IMR-90 (cell line): ENCODE measurements at regions of chr17 and their contacts with region 1.

Region 1: GRCh38 chr17:44503147-44504029 is at the start of gene GPATCH8:
- DNase-seq: peak; percentile 93
- ATAC-seq: peak; percentile 99
- H3K4me3 ChIP-seq: peak within 1 kb of the TSS; percentile 77
- H3K27ac ChIP-seq: peak within 1 kb of the TSS; percentile 95
- H3K4me1 ChIP-seq: peaks cover 2% of the 10 kb centered on the region; the same call in 1 of the 2 replicates
- H3K27me3 ChIP-seq: no peaks in the 10 kb centered on the region
- CTCF ChIP-seq: no peak
- POLR2A ChIP-seq: peak; percentile 74
- RAD21 ChIP-seq: no peak
- total RNA-seq, gene GPATCH8: 8.8 and 13.3 TPM in 2 replicates

Region 2: GRCh38 chr17:44199553-44200477 is 303.6 kb before region 1 on chr17 and contains the start of gene ATXN7L3:
- CTCF ChIA-PET with region 1: no interaction called
- POLR2A ChIA-PET with region 1: no interaction called
- dilution Hi-C with region 1: no loop called
- in situ Hi-C with region 1: loop called (anchors 25 kb)
- intact Hi-C with region 1: no loop called
- DNase-seq: peak; percentile 97
- ATAC-seq: peak; percentile 84
- H3K4me3 ChIP-seq: peak within 1 kb of the TSS; percentile 85
- H3K27ac ChIP-seq: peak within 1 kb of the TSS; percentile 98
- H3K4me1 ChIP-seq: peaks cover 22% of the 10 kb centered on the region
- H3K27me3 ChIP-seq: no peaks in the 10 kb centered on the region
- CTCF ChIP-seq: no peak
- POLR2A ChIP-seq: peak; percentile 79
- RAD21 ChIP-seq: no peak
- total RNA-seq, gene ATXN7L3: 17.2 and 17.5 TPM in 2 replicates

Region 3: GRCh38 chr17:44218344-44219107 is 284.9 kb before region 1 on chr17:
- CTCF ChIA-PET with region 1: no interaction called
- POLR2A ChIA-PET with region 1: no interaction called
- dilution Hi-C with region 1: no loop called
- in situ Hi-C with region 1: loop called (anchors 25 kb)
- intact Hi-C with region 1: loop called (anchors 10 kb)
- DNase-seq: peak; percentile 83
- ATAC-seq: peak; percentile 66
- H3K4me3 ChIP-seq: peak overlapping the region; percentile 61
- H3K27ac ChIP-seq: peak overlapping the region; percentile 92
- H3K4me1 ChIP-seq: peaks cover 12% of the 10 kb centered on the region
- H3K27me3 ChIP-seq: no peaks in the 10 kb centered on the region
- CTCF ChIP-seq: peak; percentile 66
- POLR2A ChIP-seq: peak; percentile 42; the same call in 1 of the 2 replicates
- RAD21 ChIP-seq: peak; percentile 31

Region 4: GRCh38 chr17:44400226-44400847 is 103.1 kb before region 1 on chr17:
- CTCF ChIA-PET with region 1: no interaction called
- POLR2A ChIA-PET with region 1: no interaction called
- dilution Hi-C with region 1: no loop called
- in situ Hi-C with region 1: loop called (anchors 5 kb)
- intact Hi-C with region 1: loop called (anchors 1 kb)
- DNase-seq: peak; percentile 41
- ATAC-seq: peak; percentile 89
- H3K4me3 ChIP-seq: no peak overlapping the region
- H3K27ac ChIP-seq: no peak overlapping the region
- H3K4me1 ChIP-seq: no peaks in the 10 kb centered on the region
- H3K27me3 ChIP-seq: no peaks in the 10 kb centered on the region
- CTCF ChIP-seq: peak; percentile 66
- POLR2A ChIP-seq: no peak
- RAD21 ChIP-seq: peak; percentile 65

Region 5: DNA sequence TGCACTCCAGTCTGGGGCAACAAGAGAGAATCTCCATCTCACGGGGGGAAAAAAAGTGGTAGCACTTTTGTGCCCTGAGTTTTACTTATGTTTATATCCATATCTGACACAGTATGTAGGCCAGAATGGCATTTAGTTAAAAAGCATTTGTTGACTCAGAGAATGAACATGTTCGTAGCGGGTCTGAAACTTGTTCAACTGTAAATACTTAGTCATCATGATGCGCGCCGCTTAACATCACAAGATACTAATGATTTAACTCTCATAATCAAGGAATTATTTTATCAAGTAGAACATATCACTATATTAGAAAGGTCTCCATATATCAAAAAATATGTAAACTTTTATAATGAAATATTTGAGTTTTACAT is 58.7 kb before region 1 on chr17:
- CTCF ChIA-PET with region 1: no interaction called
- POLR2A ChIA-PET with region 1: no interaction called
- dilution Hi-C with region 1: no loop called
- in situ Hi-C with region 1: no loop called
- intact Hi-C with region 1: loop called (anchors 5 kb)
- DNase-seq: peak; percentile 97
- ATAC-seq: peak; percentile 96
- H3K4me3 ChIP-seq: no peak overlapping the region; the same call in 1 of the 2 replicates
- H3K27ac ChIP-seq: peak overlapping the region; percentile 89
- H3K4me1 ChIP-seq: 0 out of 2 replicates have a peak, but pooled peaks cover 6% of the 10 kb centered on the region
- H3K27me3 ChIP-seq: no peaks in the 10 kb centered on the region
- CTCF ChIP-seq: no peak
- POLR2A ChIP-seq: no peak
- RAD21 ChIP-seq: no peak

Region 6: GRCh38 chr17:45060797-45061605 is 557.6 kb after region 1 on chr17 and contains the start of gene NMT1:
- CTCF ChIA-PET with region 1: no interaction called
- POLR2A ChIA-PET with region 1: interaction called, 12 read pairs
- dilution Hi-C with region 1: no loop called
- in situ Hi-C with region 1: no loop called
- intact Hi-C with region 1: no loop called
- DNase-seq: peak; percentile 99
- ATAC-seq: peak; percentile 95
- H3K4me3 ChIP-seq: peak within 1 kb of the TSS; percentile 66
- H3K27ac ChIP-seq: peak within 1 kb of the TSS; percentile 85
- H3K4me1 ChIP-seq: peaks cover 6% of the 10 kb centered on the region; the same call in 1 of the 2 replicates
- H3K27me3 ChIP-seq: no peaks in the 10 kb centered on the region
- CTCF ChIP-seq: no peak
- POLR2A ChIP-seq: peak; percentile 96
- RAD21 ChIP-seq: no peak
- total RNA-seq, gene NMT1: 57.5 and 60.6 TPM in 2 replicates